ENCODE measurements at regions of chr5 and their contacts with region 1.

Region 1: GRCh38 chr5:172932313-172933017 is 26.8 kb upstream of the RPL26L1 start:
- DNase-seq: peak; percentile 65
- H3K4me3 ChIP-seq: no peak overlapping the region
- H3K27ac ChIP-seq: peak overlapping the region; percentile 74
- H3K4me1 ChIP-seq: peaks cover 31% of the 10 kb centered on the region
- H3K27me3 ChIP-seq: no peaks in the 10 kb centered on the region
- CTCF ChIP-seq: peak; percentile 96 to 97
- POLR2A ChIP-seq: no peak

Region 2: DNA sequence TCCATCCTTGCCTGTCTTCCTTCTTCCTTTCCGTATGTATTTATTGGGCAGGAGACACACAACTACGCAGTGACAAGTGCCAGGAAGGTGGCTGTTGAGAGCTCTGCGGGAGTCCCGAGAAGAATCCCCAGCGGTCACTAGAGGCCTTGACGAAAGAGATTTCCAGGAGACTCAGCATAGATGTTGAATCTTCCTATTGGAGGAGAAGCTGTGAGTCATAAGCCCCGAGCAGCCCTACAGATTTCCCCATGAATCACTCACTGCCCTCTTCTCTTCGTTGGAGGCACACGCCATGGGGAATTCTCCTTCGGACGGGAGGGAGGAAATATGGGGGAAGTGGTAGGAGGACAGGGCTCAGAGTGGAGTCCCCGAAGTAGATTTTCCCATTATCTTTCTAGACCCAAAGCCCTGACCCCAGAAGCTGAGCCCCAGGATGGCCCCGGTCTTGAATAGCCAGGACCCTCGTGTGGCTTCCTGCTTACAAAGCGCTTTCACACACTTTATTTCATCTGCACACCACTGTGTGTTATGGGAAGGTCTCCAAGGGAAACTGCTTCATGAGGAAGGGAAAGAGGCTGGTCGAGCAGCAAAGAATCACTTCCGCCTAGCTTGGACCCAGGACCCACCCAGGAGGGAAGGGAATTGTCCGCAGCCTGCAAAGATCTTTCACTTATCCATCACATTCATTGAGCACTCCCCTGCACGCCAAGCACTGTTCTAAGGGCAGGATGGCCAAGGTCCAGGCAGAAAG is 174.2 kb before region 1 on chr5:
- CTCF ChIA-PET with region 1: interaction called, 10 read pairs
- POLR2A ChIA-PET with region 1: no interaction called
- dilution Hi-C with region 1: no loop called
- intact Hi-C with region 1: no loop called
- DNase-seq: peak; percentile 75
- H3K4me3 ChIP-seq: no peak overlapping the region
- H3K27ac ChIP-seq: peak overlapping the region; percentile 53
- H3K4me1 ChIP-seq: peaks cover 8% of the 10 kb centered on the region
- H3K27me3 ChIP-seq: no peaks in the 10 kb centered on the region
- CTCF ChIP-seq: peak in 1 of 2 donors; percentile 4
- POLR2A ChIP-seq: no peak

Region 3: DNA sequence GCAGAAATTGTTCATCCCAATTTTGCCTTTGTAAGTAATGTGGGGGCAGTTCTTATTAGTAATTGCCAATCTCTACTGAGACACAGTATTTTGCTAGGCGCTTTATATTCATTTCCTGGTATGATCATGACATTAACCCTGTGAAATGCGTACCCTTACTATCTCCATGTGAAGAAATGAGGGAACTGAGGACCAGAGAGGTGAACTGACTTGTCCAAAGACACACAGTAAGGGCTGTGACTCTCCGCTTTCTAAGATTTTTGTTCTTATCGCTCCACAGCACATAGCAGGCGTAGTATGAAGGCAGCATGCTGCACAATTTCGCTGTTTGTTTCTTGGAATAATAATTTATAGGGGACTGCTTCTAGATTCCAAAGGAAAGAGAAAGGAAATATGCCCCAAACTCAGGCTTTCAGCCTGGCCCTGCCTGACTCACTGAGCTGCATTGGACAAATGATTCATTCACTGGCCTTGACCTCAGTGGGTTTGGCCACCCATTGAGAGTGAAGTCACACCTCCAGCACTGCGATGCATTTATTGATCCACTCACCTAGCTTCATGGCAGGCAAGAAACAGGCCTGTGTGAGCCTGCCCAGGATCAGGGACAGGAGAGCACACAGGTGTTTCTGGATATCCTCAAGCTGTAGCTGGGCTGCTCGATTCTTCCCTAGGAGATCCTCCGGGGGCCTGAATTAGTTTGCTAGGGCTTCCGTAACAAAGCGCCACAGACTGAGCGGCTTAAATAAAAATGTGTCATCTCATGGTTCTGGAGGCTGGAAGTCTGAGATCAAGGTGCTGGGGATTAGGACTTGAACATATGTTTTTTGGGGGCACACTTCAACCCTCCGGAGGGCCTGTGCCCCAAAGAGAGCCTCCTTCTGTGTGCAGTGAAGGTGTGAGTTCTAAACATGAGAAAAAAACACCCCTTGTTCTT is 154.3 kb before region 1 on chr5:
- CTCF ChIA-PET with region 1: interaction called, 15 read pairs
- POLR2A ChIA-PET with region 1: no interaction called
- dilution Hi-C with region 1: no loop called
- intact Hi-C with region 1: no loop called
- DNase-seq: peak; percentile 65
- H3K4me3 ChIP-seq: no peak overlapping the region
- H3K27ac ChIP-seq: peak overlapping the region; percentile 85
- H3K4me1 ChIP-seq: peaks cover 21% of the 10 kb centered on the region
- H3K27me3 ChIP-seq: no peaks in the 10 kb centered on the region
- CTCF ChIP-seq: no peak
- POLR2A ChIP-seq: no peak

Region 4: GRCh38 chr5:172910828-172911627 is 21.4 kb before region 1 on chr5:
- CTCF ChIA-PET with region 1: interaction called, 33 read pairs
- POLR2A ChIA-PET with region 1: no interaction called
- dilution Hi-C with region 1: no loop called
- intact Hi-C with region 1: loop called (anchors 1 kb)
- DNase-seq: peak; percentile 90
- H3K4me3 ChIP-seq: no peak overlapping the region
- H3K27ac ChIP-seq: peak overlapping the region; percentile 89
- H3K4me1 ChIP-seq: peaks cover 15% of the 10 kb centered on the region
- H3K27me3 ChIP-seq: no peaks in the 10 kb centered on the region
- CTCF ChIP-seq: peak; percentile 60 to 75
- POLR2A ChIP-seq: peak; percentile 42

Region 5: DNA sequence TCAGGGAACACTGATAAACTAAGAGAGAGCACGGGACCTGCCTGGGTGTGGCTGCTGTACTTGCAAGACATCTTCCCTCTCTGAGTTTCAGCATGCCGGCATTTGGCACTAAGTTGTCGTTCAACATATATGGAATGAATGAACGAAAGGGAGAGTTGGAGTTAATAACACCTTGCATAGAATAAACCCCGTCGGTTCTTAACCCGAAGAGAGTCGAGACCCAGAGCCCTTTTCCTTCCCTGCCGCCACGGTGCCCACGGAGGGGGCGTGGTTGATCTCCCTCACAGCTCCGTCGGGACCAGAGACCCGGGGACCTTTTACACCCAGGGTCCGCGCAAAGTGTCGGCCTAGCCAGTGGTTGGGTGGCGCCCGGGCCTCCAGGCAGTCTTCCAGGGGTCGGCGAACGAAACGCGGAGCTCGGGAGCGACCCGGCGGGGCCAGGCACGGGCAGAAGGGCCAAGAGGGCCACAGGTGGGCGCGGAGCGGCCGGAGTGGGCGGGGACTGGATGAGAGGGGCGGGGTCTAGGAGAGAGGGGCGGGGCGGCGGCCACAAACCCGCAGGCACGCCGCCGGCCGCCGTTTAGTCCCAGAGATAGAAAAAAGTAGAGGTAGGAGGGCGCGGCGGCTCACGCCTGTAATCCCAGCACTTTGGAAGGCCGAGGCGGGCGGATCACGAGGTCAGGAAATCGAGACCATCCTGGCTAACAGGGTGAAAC is 26.0 kb after region 1 on chr5:
- CTCF ChIA-PET with region 1: interaction called, 13 read pairs
- POLR2A ChIA-PET with region 1: interaction called, 3 read pairs
- dilution Hi-C with region 1: no loop called
- intact Hi-C with region 1: loop called (anchors 1 kb)
- DNase-seq: peak; percentile 58
- H3K4me3 ChIP-seq: peak overlapping the region; percentile 59 to 66 (median 63)
- H3K27ac ChIP-seq: peak overlapping the region; percentile 59
- H3K4me1 ChIP-seq: peaks cover 22% of the 10 kb centered on the region
- H3K27me3 ChIP-seq: no peaks in the 10 kb centered on the region
- CTCF ChIP-seq: no peak
- POLR2A ChIP-seq: no peak